Cardiac septum (tissue), 1 donor: ENCODE measurements at regions of chr4 and their contacts with region 1.

Region 1: DNA sequence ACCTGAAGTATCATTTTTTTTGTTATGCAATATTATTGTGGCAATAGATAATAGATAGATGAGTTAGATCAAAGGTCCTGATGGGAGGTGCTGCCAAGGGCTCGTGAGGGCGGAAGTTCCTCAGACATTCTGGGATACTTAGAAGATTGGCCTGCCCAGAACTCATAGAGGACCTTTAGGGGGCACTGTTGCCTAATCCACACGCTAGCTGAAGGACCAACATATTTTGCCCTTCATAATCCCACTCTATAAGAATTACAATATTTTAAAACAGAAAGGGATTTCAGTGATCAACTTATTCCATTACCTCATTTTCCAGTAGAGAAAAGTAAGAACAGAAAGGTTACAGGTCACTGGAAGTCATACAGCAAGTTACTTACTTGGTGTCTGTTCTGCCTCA is 22.9 kb upstream of the COX7B2 start:
- DNase-seq: no peak

Region 2: GRCh38 chr4:47002593-47002992 is 70.6 kb after region 1 on chr4:
- intact Hi-C with region 1: loop called (anchors 5 kb)
- DNase-seq: no peak

Region 3: DNA sequence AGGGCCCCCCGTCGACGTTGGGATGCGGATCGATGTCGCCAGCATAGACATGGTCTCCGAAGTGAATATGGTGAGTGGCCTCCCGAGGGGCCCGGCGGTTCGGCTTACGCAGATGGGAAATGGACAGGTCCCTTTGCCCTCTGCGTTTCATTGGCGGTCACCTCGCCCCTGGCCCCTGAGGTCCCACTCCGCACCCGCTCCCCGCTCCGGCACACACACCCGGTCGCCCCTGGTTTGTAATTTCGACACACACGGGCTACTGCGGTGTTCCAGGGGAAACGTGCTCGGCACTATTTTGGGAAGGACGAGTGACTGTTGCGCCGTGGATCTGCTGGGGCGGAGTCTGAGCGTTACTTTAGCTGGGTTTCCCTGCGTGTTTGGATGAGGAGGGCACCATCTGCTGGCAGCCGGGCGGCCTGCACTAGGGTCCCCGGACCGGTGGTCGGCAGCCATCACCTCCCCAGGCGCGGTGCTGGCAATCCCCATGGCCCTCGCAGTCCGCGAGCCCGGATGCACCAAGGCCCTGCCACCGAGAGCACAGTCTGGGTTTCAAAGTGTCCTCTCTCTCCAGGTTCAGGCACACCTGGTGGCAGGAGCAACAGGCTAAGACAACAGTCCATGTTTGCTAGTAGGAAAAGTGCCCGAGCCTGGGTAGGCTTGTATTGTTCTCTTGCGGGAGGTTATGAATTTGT is 100.6 kb after region 1 on chr4:
- intact Hi-C with region 1: loop called (anchors 2 kb)
- DNase-seq: peak; percentile 81

Region 4: GRCh38 chr4:47071858-47072441 is 140.0 kb after region 1 on chr4:
- intact Hi-C with region 1: no loop called
- DNase-seq: no peak

Region 5: DNA sequence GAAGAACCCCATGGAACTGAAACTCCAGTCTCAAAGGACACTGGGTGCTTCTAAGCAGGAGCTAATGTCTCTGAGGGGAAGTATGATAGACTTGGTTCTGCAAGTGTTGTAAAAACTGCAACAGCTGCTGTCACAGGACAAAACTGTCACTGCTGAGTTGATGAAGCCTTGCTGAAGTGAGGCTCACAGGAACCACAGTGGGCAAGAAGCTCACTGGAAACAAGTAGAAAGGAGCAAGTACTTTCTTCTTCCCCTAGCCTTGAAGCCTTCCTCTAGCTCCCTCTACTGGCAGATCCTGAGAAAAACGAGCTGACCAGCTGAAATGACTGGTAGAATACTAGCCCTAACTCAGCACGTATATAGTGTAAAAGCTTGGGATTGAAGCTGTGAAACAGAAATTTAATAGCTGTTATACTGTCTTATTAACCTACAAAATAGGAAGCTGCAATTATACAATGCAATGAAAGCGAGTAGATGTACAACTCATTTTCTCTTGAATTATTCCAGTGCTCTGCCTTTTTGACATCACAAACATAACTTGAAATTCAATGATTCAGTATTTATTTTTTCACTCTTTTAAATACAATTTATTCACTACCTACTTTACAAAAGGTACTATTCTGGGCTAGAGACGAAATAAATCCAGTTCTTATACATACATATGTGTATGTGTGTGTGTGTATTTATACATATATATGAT is 190.8 kb after region 1 on chr4:
- intact Hi-C with region 1: loop called (anchors 10 kb)
- DNase-seq: no peak

Region 6: GRCh38 chr4:47383829-47384427 is 451.9 kb after region 1 on chr4:
- intact Hi-C with region 1: loop called (anchors 10 kb)
- DNase-seq: no peak